ENCODE measurements at regions of chr12 and their contacts with region 1.

Region 1: GRCh38 chr12:53675651-53676453 is at the start of gene ATP5MC2:
- DNase-seq: peak; percentile 96
- ATAC-seq: peak; percentile 96
- H3K4me3 ChIP-seq: peak within 1 kb of the TSS; percentile 60 to 79 (median 64)
- H3K27ac ChIP-seq: peak within 1 kb of the TSS; percentile 88
- H3K4me1 ChIP-seq: peaks cover 25% of the 10 kb centered on the region
- H3K27me3 ChIP-seq: peaks cover 0 to 12% of the 10 kb centered on the region in 2 experiments; a peak in 1 of 5 replicates
- CTCF ChIP-seq: peak; percentile 100
- EP300 ChIP-seq: 0 out of 4 replicates have a peak, but pooled peaks of 1 of the 2 experiments have one; percentile 74
- POLR2A ChIP-seq: peak; percentile 90 to 91
- RAD21 ChIP-seq: peak; percentile 100
- total RNA-seq, gene ATP5MC2: 230 and 280 TPM in 2 replicates

Region 2: DNA sequence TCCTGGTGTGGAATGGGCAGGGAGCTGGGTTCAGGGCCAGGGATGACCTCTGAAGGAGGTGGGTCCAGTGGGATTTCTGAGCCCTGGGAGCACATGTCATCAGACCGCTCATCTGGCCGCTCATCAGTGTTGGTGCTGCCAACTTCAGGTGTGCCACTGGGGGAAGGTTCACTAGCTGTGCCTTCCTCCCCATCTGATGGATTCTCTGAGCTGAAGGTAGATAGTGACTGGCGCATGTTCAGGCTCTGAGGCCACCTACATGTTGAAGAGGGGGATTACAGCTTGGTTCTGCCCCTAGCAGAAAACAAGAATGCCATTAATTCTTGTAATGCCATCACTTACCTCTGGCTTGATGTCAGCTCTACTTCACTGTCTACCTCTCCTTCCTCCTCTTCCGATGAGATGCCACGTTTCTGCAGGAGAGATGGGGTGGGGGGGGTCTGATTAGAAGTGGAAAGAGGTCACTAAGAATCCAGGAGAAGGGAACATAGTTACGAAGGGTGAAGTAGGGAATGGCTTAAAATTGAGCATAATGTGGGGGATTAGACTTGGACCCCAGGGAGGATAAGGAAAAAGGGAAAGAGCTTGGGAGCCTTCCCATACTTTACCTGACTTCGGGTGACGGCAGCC is 193.8 kb before region 1 on chr12:
- CTCF ChIA-PET with region 1: no interaction called
- POLR2A ChIA-PET with region 1: no interaction called
- in situ Hi-C with region 1: no loop called
- intact Hi-C with region 1: no loop called
- DNase-seq: peak; percentile 49
- ATAC-seq: peak; percentile 43
- H3K4me3 ChIP-seq: no peak overlapping the region
- H3K27ac ChIP-seq: no peak overlapping the region
- H3K4me1 ChIP-seq: no peaks in the 10 kb centered on the region
- H3K27me3 ChIP-seq: no peaks in the 10 kb centered on the region
- CTCF ChIP-seq: no peak; the same call in 1 of the 2 replicates
- EP300 ChIP-seq: no peak
- POLR2A ChIP-seq: peak in 1 of 2 experiments; percentile 47; a peak in 2 of 4 replicates
- RAD21 ChIP-seq: no peak

Region 3: DNA sequence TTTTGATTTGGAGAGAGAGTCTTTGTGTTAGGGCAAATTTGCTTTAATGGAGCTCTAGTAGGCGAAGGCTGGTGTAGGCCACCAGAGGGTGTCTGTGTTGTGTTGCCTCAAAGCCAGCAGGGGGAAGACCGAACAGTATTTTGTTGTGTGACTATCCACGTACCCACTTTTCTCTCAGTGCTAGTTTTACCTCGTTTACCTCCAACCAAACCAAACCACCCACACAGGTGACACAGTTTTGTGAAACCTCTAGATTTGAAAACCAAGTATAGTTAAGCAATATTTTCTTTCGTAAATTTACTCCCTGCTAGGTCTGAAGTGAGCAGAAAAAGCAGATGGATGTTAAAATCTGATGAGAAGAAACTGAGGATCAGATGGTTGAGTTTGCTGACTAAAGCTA is 132.3 kb before region 1 on chr12:
- CTCF ChIA-PET with region 1: interaction called, 76 read pairs
- POLR2A ChIA-PET with region 1: interaction called, 65 read pairs
- in situ Hi-C with region 1: loop called (anchors 5 kb)
- intact Hi-C with region 1: loop called (anchors 1 kb)
- DNase-seq: peak; percentile 68
- ATAC-seq: peak; percentile 90
- H3K4me3 ChIP-seq: no peak overlapping the region
- H3K27ac ChIP-seq: no peak overlapping the region
- H3K4me1 ChIP-seq: peaks cover 35% of the 10 kb centered on the region
- H3K27me3 ChIP-seq: no peaks in the 10 kb centered on the region
- CTCF ChIP-seq: peak; percentile 69
- EP300 ChIP-seq: no peak
- POLR2A ChIP-seq: no peak
- RAD21 ChIP-seq: peak; percentile 75

Region 4: DNA sequence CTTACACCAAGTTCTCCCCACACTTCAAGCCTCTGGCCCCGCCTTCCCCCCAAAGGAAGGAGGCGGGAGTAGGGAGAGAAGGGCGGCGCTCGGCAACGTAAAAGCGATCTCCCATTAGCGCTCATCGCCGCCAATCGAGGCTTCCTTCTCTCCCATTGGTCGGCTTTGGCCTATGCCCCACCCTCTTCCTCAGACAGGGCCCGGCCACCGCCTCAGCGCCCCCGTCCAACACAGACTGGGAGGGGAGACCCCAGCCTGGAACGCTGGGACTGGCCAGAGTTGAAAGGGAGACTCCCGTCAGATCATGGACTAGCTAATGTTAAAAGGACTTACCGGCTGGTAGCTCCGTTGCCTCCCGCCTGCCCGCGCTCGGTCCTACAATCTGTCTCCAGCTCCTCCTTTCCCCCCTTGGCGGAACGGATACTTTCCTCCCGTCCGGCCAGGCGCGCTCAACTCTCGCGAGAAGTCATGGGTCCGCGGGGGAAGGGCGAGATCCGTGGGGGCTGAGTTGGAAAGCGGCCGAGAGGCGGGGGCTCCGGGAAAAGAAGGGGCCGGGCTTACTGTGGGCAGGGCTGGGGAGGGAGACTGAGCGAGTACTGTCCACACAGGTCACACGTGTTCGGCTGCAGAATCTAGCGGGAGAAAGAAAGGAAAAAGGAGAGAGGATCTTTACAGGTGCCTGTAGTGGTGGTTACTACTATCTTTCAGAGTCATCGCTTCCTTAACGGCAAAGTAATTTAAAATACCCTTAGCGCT is 49.7 kb before region 1 on chr12 and contains the start of gene ATF7:
- CTCF ChIA-PET with region 1: interaction called, 3 read pairs
- POLR2A ChIA-PET with region 1: interaction called, 26 read pairs
- in situ Hi-C with region 1: loop called (anchors 5 kb)
- intact Hi-C with region 1: loop called (anchors 1 kb)
- DNase-seq: peak; percentile 92
- ATAC-seq: peak; percentile 97
- H3K4me3 ChIP-seq: peak within 1 kb of the TSS; percentile 85 to 95 (median 92)
- H3K27ac ChIP-seq: peak within 1 kb of the TSS; percentile 88
- H3K4me1 ChIP-seq: peaks cover 28% of the 10 kb centered on the region
- H3K27me3 ChIP-seq: no peaks in the 10 kb centered on the region; a peak in 1 of 5 replicates
- CTCF ChIP-seq: peak; percentile 22; the same call in 1 of the 2 replicates
- EP300 ChIP-seq: peak in 1 of 2 experiments; percentile 42; a peak in 2 of 4 replicates
- POLR2A ChIP-seq: peak; percentile 75 to 81
- RAD21 ChIP-seq: no peak; the same call in 1 of the 2 replicates
- total RNA-seq, gene ATF7: 9.6 and 11.3 TPM in 2 replicates

Region 5: GRCh38 chr12:53643232-53643979 is 32.4 kb before region 1 on chr12:
- CTCF ChIA-PET with region 1: no interaction called
- POLR2A ChIA-PET with region 1: interaction called, 12 read pairs
- in situ Hi-C with region 1: no loop called
- intact Hi-C with region 1: loop called (anchors 5 kb)
- DNase-seq: no peak
- ATAC-seq: no peak
- H3K4me3 ChIP-seq: no peak overlapping the region
- H3K27ac ChIP-seq: no peak overlapping the region
- H3K4me1 ChIP-seq: peaks cover 6% of the 10 kb centered on the region
- H3K27me3 ChIP-seq: no peaks in the 10 kb centered on the region
- CTCF ChIP-seq: no peak
- EP300 ChIP-seq: no peak
- POLR2A ChIP-seq: no peak
- RAD21 ChIP-seq: no peak

Region 6: DNA sequence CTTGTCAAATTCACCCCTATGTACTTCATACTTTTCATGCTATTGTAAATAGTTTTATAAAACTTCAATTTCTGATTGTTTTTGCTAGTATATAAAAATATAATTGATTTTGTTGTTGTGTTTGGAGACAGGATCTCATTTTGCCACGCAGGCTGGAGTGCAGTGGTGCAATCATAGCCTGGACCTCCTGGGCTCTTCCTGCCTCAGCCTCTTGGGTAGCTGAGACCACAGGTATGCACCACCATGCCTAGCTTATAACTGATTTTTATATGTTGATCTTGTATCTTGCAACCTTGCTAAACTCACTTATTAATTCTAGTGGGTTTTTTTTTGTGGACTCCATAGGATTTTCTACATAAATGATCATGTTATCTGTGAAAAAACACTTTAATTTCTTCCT is 23.5 kb before region 1 on chr12:
- CTCF ChIA-PET with region 1: no interaction called
- POLR2A ChIA-PET with region 1: interaction called, 61 read pairs
- in situ Hi-C with region 1: no loop called
- intact Hi-C with region 1: no loop called
- DNase-seq: no peak
- ATAC-seq: peak; percentile 46; the same call in 1 of the 3 replicates
- H3K4me3 ChIP-seq: no peak overlapping the region
- H3K27ac ChIP-seq: no peak overlapping the region
- H3K4me1 ChIP-seq: peaks cover 33% of the 10 kb centered on the region
- H3K27me3 ChIP-seq: no peaks in the 10 kb centered on the region
- CTCF ChIP-seq: no peak
- EP300 ChIP-seq: no peak
- POLR2A ChIP-seq: no peak
- RAD21 ChIP-seq: no peak